CD4-positive, alpha-beta T cell (primary cell): ENCODE measurements at regions of chr19 and their contacts with region 1.

Region 1: GRCh38 chr19:20661150-20661819 is at the start of gene ZNF626:
- DNase-seq: peak; percentile 79 to 96 (median 86)
- ATAC-seq: peak; percentile 98
- H3K4me3 ChIP-seq: peak within 1 kb of the TSS; percentile 93
- H3K4me3 Mint-ChIP-seq: peak within 1 kb of the TSS; percentile 98
- H3K27ac ChIP-seq: peak within 1 kb of the TSS; percentile 59 to 81
- H3K27ac Mint-ChIP-seq: peak within 1 kb of the TSS; percentile 98
- H3K4me1 ChIP-seq: peaks cover 19% of the 10 kb centered on the region
- H3K4me1 Mint-ChIP-seq: peaks cover 65% of the 10 kb centered on the region
- H3K27me3 ChIP-seq: no peaks in the 10 kb centered on the region
- H3K27me3 Mint-ChIP-seq: no peaks in the 10 kb centered on the region
- CTCF ChIP-seq: no peak
- total RNA-seq, gene ZNF626: 6.7 to 6.8 TPM

Region 2: GRCh38 chr19:20237761-20238623 is 423.3 kb before region 1 on chr19:
- CTCF ChIA-PET with region 1: no interaction called
- POLR2A ChIA-PET with region 1: interaction called, 8 read pairs
- intact Hi-C with region 1: loop called in 1 of 2 experiments (anchors 2 kb)
- DNase-seq: peak; percentile 71 to 93 (median 82)
- ATAC-seq: peak; percentile 98
- H3K4me3 ChIP-seq: peak overlapping the region; percentile 88
- H3K4me3 Mint-ChIP-seq: peak overlapping the region; percentile 97
- H3K27ac ChIP-seq: no peak overlapping the region
- H3K27ac Mint-ChIP-seq: peak overlapping the region; percentile 70
- H3K4me1 ChIP-seq: peaks cover 11% of the 10 kb centered on the region
- H3K4me1 Mint-ChIP-seq: peaks cover 12% of the 10 kb centered on the region
- H3K27me3 ChIP-seq: no peaks in the 10 kb centered on the region
- H3K27me3 Mint-ChIP-seq: no peaks in the 10 kb centered on the region
- CTCF ChIP-seq: no peak

Region 3: GRCh38 chr19:20640545-20640944 is 20.7 kb before region 1 on chr19:
- CTCF ChIA-PET with region 1: no interaction called
- POLR2A ChIA-PET with region 1: no interaction called
- intact Hi-C with region 1: no loop called
- DNase-seq: no peak
- ATAC-seq: no peak
- H3K4me3 ChIP-seq: no peak overlapping the region
- H3K4me3 Mint-ChIP-seq: no peak overlapping the region
- H3K27ac ChIP-seq: no peak overlapping the region
- H3K27ac Mint-ChIP-seq: no peak overlapping the region
- H3K4me1 ChIP-seq: no peaks in the 10 kb centered on the region
- H3K4me1 Mint-ChIP-seq: no peaks in the 10 kb centered on the region
- H3K27me3 ChIP-seq: no peaks in the 10 kb centered on the region
- H3K27me3 Mint-ChIP-seq: no peaks in the 10 kb centered on the region
- CTCF ChIP-seq: no peak

Region 4: GRCh38 chr19:20776083-20777076 is 115.1 kb after region 1 on chr19 and contains the start of gene ZNF66:
- CTCF ChIA-PET with region 1: no interaction called
- POLR2A ChIA-PET with region 1: interaction called, 33 read pairs
- intact Hi-C with region 1: loop called (anchors 5 kb)
- DNase-seq: peak; percentile 90 to 98 (median 93)
- ATAC-seq: peak; percentile 97
- H3K4me3 ChIP-seq: peak within 1 kb of the TSS; percentile 85
- H3K4me3 Mint-ChIP-seq: peak within 1 kb of the TSS; percentile 97
- H3K27ac ChIP-seq: peak within 1 kb of the TSS; percentile 70 to 74
- H3K27ac Mint-ChIP-seq: peak within 1 kb of the TSS; percentile 91
- H3K4me1 ChIP-seq: peaks cover 6% of the 10 kb centered on the region
- H3K4me1 Mint-ChIP-seq: peaks cover 31% of the 10 kb centered on the region
- H3K27me3 ChIP-seq: no peaks in the 10 kb centered on the region
- H3K27me3 Mint-ChIP-seq: no peaks in the 10 kb centered on the region
- CTCF ChIP-seq: no peak
- total RNA-seq, gene ZNF66: 6.4 to 7.4 TPM

Region 5: DNA sequence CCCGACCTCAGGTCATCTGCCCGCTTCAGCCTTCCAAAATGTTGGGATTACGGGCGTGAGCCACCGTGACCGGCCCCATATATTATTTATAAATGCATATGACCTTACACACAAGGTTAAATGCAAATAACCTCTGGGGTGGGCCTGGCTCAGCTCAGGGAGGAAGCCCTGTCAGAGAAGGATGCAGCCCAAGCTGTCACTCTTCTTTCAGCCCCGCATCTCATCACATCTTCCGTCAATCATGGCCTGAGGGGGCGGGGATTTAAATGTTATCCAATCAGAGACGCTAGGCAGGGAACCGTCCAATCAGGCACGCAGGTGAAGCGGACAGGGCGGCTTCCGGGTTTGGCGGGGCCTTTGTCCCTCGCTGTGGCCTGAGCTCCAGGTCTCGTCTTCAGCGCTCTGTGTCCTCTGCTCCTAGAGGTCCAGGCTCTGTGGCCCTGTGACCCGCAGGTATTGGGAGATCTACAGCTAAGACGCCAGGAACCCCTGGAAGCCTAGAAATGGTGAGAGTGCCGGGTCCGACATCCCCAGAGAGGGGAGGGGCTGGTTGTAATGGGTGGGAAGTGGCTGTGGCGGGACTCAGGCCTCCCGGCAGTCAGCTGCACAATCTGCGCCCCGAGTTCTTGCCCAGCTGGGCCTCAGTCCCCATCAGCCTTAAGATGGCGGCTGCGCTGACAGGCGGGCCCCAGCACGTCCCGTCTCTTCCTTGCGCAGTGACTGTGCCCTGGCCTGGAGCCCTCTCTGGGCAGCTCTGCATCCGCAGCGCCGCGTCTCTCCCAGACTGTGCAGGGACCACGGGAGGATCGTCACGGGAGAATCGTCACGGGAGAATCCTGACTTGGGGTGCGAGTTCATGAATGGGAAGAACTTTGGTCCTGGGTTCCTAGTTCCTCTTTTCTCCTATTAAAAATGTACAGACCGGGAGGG is 359.3 kb after region 1 on chr19 and contains the start of gene ZNF430:
- CTCF ChIA-PET with region 1: no interaction called
- POLR2A ChIA-PET with region 1: interaction called, 12 read pairs
- intact Hi-C with region 1: loop called in 1 of 2 experiments (anchors 10 kb)
- DNase-seq: peak; percentile 82 to 98 (median 87)
- ATAC-seq: peak; percentile 95
- H3K4me3 ChIP-seq: peak within 1 kb of the TSS; percentile 98
- H3K4me3 Mint-ChIP-seq: peak within 1 kb of the TSS; percentile 98
- H3K27ac ChIP-seq: peak within 1 kb of the TSS; percentile 86 to 93
- H3K27ac Mint-ChIP-seq: peak within 1 kb of the TSS; percentile 100
- H3K4me1 ChIP-seq: peaks cover 29% of the 10 kb centered on the region
- H3K4me1 Mint-ChIP-seq: peaks cover 52% of the 10 kb centered on the region
- H3K27me3 ChIP-seq: no peaks in the 10 kb centered on the region
- H3K27me3 Mint-ChIP-seq: no peaks in the 10 kb centered on the region
- CTCF ChIP-seq: no peak
- total RNA-seq, gene ZNF430: 40.5 to 43.8 TPM

Region 6: DNA sequence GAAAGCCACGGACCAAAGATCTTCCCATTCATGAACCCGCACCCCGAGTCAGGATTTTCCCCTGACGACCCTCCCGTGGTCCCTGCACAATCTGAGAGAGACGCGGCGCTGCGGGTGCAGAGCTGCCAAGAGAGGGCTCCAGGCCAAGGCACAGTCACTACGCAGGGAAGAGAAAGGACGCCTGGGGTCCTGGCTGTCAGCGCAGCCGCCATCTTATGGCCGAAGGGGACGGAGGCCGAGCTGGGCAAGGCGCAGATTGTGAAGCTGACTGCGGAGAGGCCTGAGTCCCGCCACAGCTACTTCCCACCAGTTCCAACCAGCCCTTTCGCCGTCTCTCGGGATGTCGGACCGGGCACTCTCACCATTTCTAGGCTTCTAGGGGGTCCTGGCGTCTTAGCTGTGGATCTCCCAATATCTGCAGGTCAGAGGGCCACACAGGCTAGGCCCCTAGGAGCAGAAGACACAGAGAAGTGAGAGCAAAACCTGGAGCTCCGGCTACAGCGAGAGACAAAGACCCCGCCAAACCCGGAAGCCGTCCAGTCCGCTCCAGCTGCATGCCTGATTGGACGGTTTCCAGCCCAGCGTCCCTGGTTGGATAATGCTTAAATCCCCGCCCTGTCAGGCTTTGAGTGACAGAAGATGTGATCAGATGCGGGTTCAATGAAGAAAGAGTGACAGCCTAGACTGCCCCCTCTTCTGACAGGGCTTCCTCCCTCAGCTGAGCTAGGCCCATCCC is 1105.9 kb after region 1 on chr19 and contains the start of gene ZNF100:
- CTCF ChIA-PET with region 1: no interaction called
- POLR2A ChIA-PET with region 1: interaction called, 10 read pairs
- intact Hi-C with region 1: no loop called
- DNase-seq: peak; percentile 73 to 92 (median 82)
- ATAC-seq: peak; percentile 98
- H3K4me3 ChIP-seq: peak within 1 kb of the TSS; percentile 94
- H3K4me3 Mint-ChIP-seq: peak within 1 kb of the TSS; percentile 95
- H3K27ac ChIP-seq: peak within 1 kb of the TSS; percentile 44 to 52
- H3K27ac Mint-ChIP-seq: peak within 1 kb of the TSS; percentile 87
- H3K4me1 ChIP-seq: peaks cover 13% of the 10 kb centered on the region
- H3K4me1 Mint-ChIP-seq: peaks cover 45% of the 10 kb centered on the region
- H3K27me3 ChIP-seq: no peaks in the 10 kb centered on the region
- H3K27me3 Mint-ChIP-seq: no peaks in the 10 kb centered on the region
- CTCF ChIP-seq: no peak
- total RNA-seq, gene ZNF100: 10.8 to 11.0 TPM

Region 7: GRCh38 chr19:22634450-22634827 is 1973.2 kb after region 1 on chr19:
- CTCF ChIA-PET with region 1: no interaction called
- POLR2A ChIA-PET with region 1: interaction called, 3 read pairs
- intact Hi-C with region 1: loop called in 1 of 2 experiments (anchors 10 kb)
- DNase-seq: no peak
- ATAC-seq: peak; percentile 16
- H3K4me3 ChIP-seq: peak overlapping the region; percentile 65
- H3K4me3 Mint-ChIP-seq: peak overlapping the region; percentile 96
- H3K27ac ChIP-seq: no peak overlapping the region
- H3K27ac Mint-ChIP-seq: peak overlapping the region; percentile 83
- H3K4me1 ChIP-seq: no peaks in the 10 kb centered on the region
- H3K4me1 Mint-ChIP-seq: peaks cover 16% of the 10 kb centered on the region
- H3K27me3 ChIP-seq: peaks cover 0 to 2% of the 10 kb centered on the region in 2 experiments
- H3K27me3 Mint-ChIP-seq: no peaks in the 10 kb centered on the region
- CTCF ChIP-seq: no peak